HCT116 (cell line): ENCODE measurements at regions of chr17 and their contacts with region 1.

Region 1: GRCh38 chr17:56592487-56593085 is 913 bp upstream of the NOG start:
- DNase-seq: no peak
- ATAC-seq: peak; percentile 80
- H3K4me3 ChIP-seq: peak overlapping the region; percentile 60 to 71
- H3K27ac ChIP-seq: no peak overlapping the region
- H3K4me1 ChIP-seq: peaks cover 5 to 21% of the 10 kb centered on the region in 2 experiments; a peak in 2 of 4 replicates
- H3K27me3 ChIP-seq: peaks cover 35% of the 10 kb centered on the region; the same call in 1 of the 2 replicates
- CTCF ChIP-seq: peak; percentile 72 to 98 (median 76)
- POLR2A ChIP-seq: no peak
- RAD21 ChIP-seq: peak; percentile 87

Region 2: GRCh38 chr17:56581635-56582627 is 10.7 kb before region 1 on chr17:
- CTCF ChIA-PET with region 1: interaction called, 13 read pairs
- POLR2A ChIA-PET with region 1: no interaction called
- RAD21 ChIA-PET with region 1: no interaction called
- intact Hi-C with region 1: no loop called
- DNase-seq: no peak
- ATAC-seq: no peak
- H3K4me3 ChIP-seq: no peak overlapping the region
- H3K27ac ChIP-seq: no peak overlapping the region
- H3K4me1 ChIP-seq: no peaks in the 10 kb centered on the region
- H3K27me3 ChIP-seq: peaks cover 33% of the 10 kb centered on the region; the same call in 1 of the 2 replicates
- CTCF ChIP-seq: no peak
- POLR2A ChIP-seq: no peak
- RAD21 ChIP-seq: no peak

Region 3: GRCh38 chr17:56653877-56654276 is 61.3 kb after region 1 on chr17:
- CTCF ChIA-PET with region 1: interaction called, 5 read pairs
- POLR2A ChIA-PET with region 1: no interaction called
- RAD21 ChIA-PET with region 1: no interaction called
- intact Hi-C with region 1: loop called (anchors 2 kb)
- DNase-seq: peak; percentile 63
- ATAC-seq: peak; percentile 96
- H3K4me3 ChIP-seq: no peak overlapping the region
- H3K27ac ChIP-seq: no peak overlapping the region
- H3K4me1 ChIP-seq: no peaks in the 10 kb centered on the region
- H3K27me3 ChIP-seq: no peaks in the 10 kb centered on the region
- CTCF ChIP-seq: peak; percentile 71 to 90 (median 89)
- POLR2A ChIP-seq: no peak
- RAD21 ChIP-seq: peak; percentile 72

Region 4: DNA sequence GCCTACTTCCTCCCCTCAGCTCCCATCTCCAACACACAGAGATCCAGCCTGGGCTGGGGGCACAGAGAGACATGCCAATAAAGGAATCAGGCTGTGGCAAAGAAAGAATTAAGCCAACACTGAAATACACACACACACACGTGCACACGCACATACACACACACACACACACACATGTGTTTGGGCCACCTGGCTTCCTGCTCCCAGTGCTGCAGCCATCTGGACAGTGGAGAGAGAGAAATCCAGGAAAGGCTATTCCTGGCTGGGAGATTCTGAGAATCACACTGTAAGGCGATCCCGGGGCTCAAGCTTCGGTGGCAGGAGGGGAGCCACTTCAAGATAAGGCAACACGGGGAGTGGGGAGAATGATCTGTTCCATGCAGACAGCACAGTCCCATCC is 73.3 kb after region 1 on chr17:
- CTCF ChIA-PET with region 1: no interaction called
- POLR2A ChIA-PET with region 1: no interaction called
- RAD21 ChIA-PET with region 1: no interaction called
- intact Hi-C with region 1: no loop called
- DNase-seq: no peak
- ATAC-seq: no peak
- H3K4me3 ChIP-seq: no peak overlapping the region
- H3K27ac ChIP-seq: no peak overlapping the region
- H3K4me1 ChIP-seq: no peaks in the 10 kb centered on the region
- H3K27me3 ChIP-seq: no peaks in the 10 kb centered on the region
- CTCF ChIP-seq: no peak
- POLR2A ChIP-seq: no peak
- RAD21 ChIP-seq: no peak

Region 5: DNA sequence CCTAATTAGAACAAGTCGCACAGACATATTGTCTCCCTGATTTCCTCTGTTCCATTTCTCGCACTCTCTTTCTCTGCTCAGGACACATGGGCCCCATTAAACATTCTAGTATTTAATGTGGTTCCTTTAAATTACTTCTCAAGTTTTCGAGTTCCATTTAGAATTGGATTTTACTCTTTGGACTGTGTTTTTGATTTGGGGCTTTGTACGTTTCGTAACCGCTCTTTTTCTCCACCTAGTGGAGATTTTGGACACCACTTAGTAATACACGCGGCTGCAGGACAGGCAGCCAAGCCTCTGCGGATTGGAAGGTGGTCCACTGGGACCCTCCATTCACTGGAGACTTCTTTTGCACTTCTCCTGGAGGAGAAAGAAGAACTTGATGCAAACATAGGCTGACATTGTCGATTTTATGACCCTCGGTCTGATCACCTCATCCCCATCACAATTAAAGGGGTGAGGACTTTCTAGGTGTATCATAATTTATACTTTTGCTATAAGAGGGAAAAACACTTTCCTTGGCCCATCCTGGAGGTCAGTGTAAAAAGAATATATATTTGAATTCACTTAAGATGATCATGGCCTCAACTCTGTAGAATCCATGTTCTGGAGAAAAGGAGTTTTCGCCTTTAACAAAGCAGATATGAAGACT is 86.7 kb after region 1 on chr17:
- CTCF ChIA-PET with region 1: no interaction called
- POLR2A ChIA-PET with region 1: no interaction called
- RAD21 ChIA-PET with region 1: interaction called in 1 of 2 experiments, 7 read pairs
- intact Hi-C with region 1: loop called (anchors 1 kb)
- DNase-seq: peak; percentile 15
- ATAC-seq: peak; percentile 80
- H3K4me3 ChIP-seq: no peak overlapping the region
- H3K27ac ChIP-seq: no peak overlapping the region
- H3K4me1 ChIP-seq: peaks cover 10 to 39% of the 10 kb centered on the region in 2 experiments; a peak in 3 of 4 replicates
- H3K27me3 ChIP-seq: peaks cover 12% of the 10 kb centered on the region; the same call in 1 of the 2 replicates
- CTCF ChIP-seq: peak; percentile 53 to 88 (median 77)
- POLR2A ChIP-seq: no peak
- RAD21 ChIP-seq: peak; percentile 54

Region 6: GRCh38 chr17:56779898-56780733 is 187.5 kb after region 1 on chr17:
- CTCF ChIA-PET with region 1: interaction called, 15 read pairs
- POLR2A ChIA-PET with region 1: no interaction called
- RAD21 ChIA-PET with region 1: interaction called, 3 to 5 read pairs
- intact Hi-C with region 1: loop called (anchors 1 kb)
- DNase-seq: peak; percentile 69
- ATAC-seq: peak; percentile 99
- H3K4me3 ChIP-seq: peak overlapping the region; percentile 31 to 49
- H3K27ac ChIP-seq: no peak overlapping the region
- H3K4me1 ChIP-seq: peaks cover 8 to 16% of the 10 kb centered on the region in 2 experiments; a peak in 3 of 4 replicates
- H3K27me3 ChIP-seq: peaks cover 5% of the 10 kb centered on the region; the same call in 1 of the 2 replicates
- CTCF ChIP-seq: peak; percentile 91 to 99 (median 99)
- POLR2A ChIP-seq: no peak
- RAD21 ChIP-seq: peak; percentile 98

Region 7: GRCh38 chr17:56939901-56940343 is 347.3 kb after region 1 on chr17:
- CTCF ChIA-PET with region 1: no interaction called
- POLR2A ChIA-PET with region 1: no interaction called
- RAD21 ChIA-PET with region 1: no interaction called
- intact Hi-C with region 1: loop called (anchors 1 kb)
- DNase-seq: peak; percentile 50
- ATAC-seq: peak; percentile 89
- H3K4me3 ChIP-seq: no peak overlapping the region
- H3K27ac ChIP-seq: no peak overlapping the region
- H3K4me1 ChIP-seq: peaks cover 4 to 6% of the 10 kb centered on the region in 2 experiments; a peak in 1 of 4 replicates
- H3K27me3 ChIP-seq: no peaks in the 10 kb centered on the region
- CTCF ChIP-seq: peak; percentile 73 to 91 (median 84)
- POLR2A ChIP-seq: no peak
- RAD21 ChIP-seq: peak; percentile 94